ENCODE measurements at regions of chr3 and their contacts with region 1.

Region 1: GRCh38 chr3:6216135-6217020 is 644.5 kb upstream of the GRM7 start:
- DNase-seq: no peak
- ATAC-seq: no peak
- H3K4me3 ChIP-seq: no peak overlapping the region
- H3K27ac ChIP-seq: no peak overlapping the region
- H3K4me1 ChIP-seq: peaks cover 0 to 3% (median 0%) of the 10 kb centered on the region in 9 donors
- H3K27me3 ChIP-seq: no peaks in the 10 kb centered on the region
- CTCF ChIP-seq: no peak

Region 2: DNA sequence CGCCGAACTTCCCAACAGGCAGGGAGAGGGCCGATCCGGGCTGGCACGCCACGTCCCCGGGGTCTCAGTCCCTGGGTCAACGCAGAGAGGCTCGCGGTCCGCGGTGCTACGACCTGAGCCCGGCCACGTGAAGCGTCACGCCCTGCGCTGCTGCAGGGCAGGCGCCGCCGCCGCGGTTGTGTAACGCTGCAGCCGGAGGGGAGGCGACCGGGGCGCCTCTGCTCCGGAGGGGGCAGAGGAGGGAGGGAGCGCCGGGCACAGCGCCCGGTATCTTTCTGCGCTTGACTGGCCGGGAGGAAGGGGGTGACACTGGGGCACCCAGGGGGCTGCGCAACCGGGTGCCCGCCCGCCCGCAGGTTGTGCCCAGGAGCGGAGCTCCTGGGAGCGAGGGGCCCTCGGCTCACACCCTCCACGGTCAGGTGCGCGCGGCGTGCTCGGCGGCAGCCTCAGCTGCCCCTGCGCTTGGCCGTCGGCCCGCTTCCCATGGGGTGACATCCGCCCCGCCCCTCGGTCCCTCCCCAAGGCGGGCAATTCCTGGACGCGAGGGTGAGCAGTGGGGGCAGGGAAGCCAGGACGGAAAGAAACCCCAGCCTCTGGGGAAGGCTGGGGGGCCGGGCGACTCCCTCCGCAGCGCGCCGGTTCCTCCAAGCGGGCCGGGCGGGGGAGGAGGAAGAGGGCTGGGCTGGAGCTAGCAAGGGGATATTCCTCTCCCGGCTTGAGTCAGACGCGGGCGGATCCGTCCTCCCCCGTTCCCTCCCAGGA is 1238.0 kb before region 1 on chr3:
- intact Hi-C with region 1: no loop called
- DNase-seq: peak; percentile 96 to 99
- ATAC-seq: peak; percentile 75 to 88 (median 80)
- H3K4me3 ChIP-seq: peak overlapping the region; percentile 47 to 98 (median 86)
- H3K27ac ChIP-seq: peak overlapping the region; percentile 97 to 100 (median 100)
- H3K4me1 ChIP-seq: peaks cover 4 to 48% (median 34%) of the 10 kb centered on the region in 9 donors
- H3K27me3 ChIP-seq: no peaks in the 10 kb centered on the region
- CTCF ChIP-seq: peak in 2 of 9 donors; percentile 8 to 17

Region 3: DNA sequence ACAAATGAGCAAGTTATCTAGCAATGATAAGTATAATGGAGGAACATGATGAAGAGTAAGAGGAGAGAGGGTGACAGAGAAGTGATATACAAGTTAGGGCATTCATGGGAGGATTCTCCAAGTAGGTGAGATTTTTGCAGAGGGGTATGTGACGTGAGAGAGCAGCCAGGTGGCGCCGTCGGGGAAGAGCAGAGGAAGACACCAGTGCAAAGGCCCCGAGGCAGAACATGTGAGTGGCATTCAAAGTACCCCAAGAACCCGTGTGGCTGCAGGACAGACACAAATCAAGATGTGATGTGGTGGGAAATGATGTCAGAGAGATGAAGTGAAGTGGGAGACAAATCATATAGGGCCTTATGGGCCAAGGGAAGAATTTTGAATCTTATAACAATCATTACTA is 562.8 kb after region 1 on chr3:
- intact Hi-C with region 1: loop called in 1 of 10 experiments (anchors 10 kb)
- DNase-seq: no peak
- ATAC-seq: no peak
- H3K4me3 ChIP-seq: no peak overlapping the region
- H3K27ac ChIP-seq: no peak overlapping the region
- H3K4me1 ChIP-seq: no peaks in the 10 kb centered on the region
- H3K27me3 ChIP-seq: peaks cover 0 to 4% (median 0%) of the 10 kb centered on the region in 7 donors
- CTCF ChIP-seq: no peak

Measured in heart right ventricle (tissue), 16 donors.